Caco-2 (cell line): ENCODE measurements at regions of chr4 and their contacts with region 1.

Region 1: DNA sequence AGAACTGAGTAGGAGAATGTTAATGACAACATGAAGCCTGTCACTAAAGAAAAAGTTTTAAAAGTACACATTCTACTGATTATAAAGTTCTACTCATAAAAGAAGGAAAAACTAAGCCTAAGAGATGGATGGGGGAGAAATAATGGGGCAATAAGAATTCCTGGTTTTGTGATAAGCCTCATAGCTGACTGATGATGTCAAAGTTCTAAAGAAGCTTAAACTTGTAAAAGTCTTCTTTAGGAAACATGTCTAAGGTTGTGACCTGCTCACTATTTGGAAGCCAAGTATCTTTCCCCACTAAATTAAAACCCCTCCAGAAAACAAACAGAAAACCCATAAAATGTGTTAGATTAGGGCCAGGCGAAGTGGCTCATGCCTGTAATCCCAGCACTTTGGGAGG is 232.9 kb upstream of the GIMD1 start:
- DNase-seq: peak in 1 of 2 experiments; percentile 35
- H3K4me3 ChIP-seq: no peak overlapping the region
- H3K4me3 Mint-ChIP-seq: peak overlapping the region; percentile 9
- H3K27ac Mint-ChIP-seq: peak overlapping the region; percentile 67
- H3K4me1 ChIP-seq: peaks cover 35% of the 10 kb centered on the region
- H3K4me1 Mint-ChIP-seq: peaks cover 6% of the 10 kb centered on the region
- H3K27me3 ChIP-seq: no peaks in the 10 kb centered on the region
- H3K27me3 Mint-ChIP-seq: no peaks in the 10 kb centered on the region
- CTCF ChIP-seq: no peak

Region 2: DNA sequence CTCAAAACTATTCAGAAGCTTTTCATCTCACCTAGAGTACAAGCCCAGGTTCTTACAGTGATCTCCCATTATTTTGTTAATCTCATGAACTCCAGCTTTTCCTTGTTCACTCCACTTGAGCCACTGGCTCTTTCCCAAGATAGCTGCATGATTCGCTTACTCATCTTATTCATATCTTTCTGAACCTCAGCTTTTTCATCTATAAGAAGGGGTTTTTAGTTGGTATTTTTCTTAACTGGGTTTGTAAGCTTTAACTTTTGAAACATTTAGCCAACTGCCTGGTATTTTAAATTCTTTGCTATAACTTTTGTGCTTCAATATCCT is 256.9 kb before region 1 on chr4:
- CTCF ChIA-PET with region 1: no interaction called
- POLR2A ChIA-PET with region 1: no interaction called
- intact Hi-C with region 1: loop called (anchors 1 kb)
- DNase-seq: no peak
- H3K4me3 ChIP-seq: no peak overlapping the region
- H3K4me3 Mint-ChIP-seq: peak overlapping the region; percentile 27
- H3K27ac Mint-ChIP-seq: peak overlapping the region; percentile 71
- H3K4me1 ChIP-seq: peaks cover 55% of the 10 kb centered on the region
- H3K4me1 Mint-ChIP-seq: peaks cover 16% of the 10 kb centered on the region
- H3K27me3 ChIP-seq: no peaks in the 10 kb centered on the region
- H3K27me3 Mint-ChIP-seq: no peaks in the 10 kb centered on the region
- CTCF ChIP-seq: no peak

Region 3: DNA sequence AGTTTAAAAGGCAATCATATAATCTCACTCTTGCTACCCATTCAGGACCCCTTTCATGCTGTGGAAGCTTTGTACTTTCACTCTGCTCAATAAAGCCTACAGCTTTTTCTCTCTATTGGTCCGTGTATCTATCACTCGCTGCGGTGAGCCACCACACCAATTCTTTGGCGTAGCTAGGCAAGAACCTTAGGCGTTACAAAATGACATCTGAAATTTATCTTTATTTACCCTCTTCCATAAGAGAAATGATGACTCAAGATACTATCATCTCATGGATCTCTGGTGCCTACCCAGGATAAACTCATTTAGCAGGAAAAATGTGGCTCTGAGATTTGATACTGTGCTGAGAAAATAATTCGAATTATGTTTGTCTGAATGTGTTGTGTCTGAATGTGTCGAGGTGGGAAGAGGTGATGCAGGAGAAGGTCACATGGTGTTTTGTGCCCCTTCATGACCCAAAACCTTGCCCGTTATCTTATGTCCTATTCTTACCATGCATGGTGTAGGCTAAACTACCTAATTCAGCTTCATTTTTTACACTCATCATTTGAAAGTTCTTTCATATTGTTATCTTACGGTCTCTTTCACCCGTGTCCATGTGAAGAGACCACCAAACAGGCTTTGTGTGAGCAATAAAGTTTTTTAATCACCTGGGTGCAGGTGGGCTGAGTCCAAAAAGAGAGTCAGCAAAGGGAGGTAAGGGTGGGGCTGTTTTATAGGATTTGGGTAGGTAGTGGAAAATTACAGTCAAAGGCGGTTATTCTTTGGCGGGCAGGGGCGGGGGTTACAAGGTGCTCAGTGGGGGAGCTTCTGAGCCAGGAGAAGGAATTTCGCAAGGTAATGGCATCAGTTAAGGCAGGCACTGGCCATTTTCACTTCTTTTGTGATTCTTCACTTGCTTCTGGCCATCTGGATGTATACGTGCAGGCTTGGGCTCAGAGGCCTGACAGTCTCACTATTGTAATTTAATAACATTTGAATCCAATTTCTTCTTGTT is 191.3 kb before region 1 on chr4:
- CTCF ChIA-PET with region 1: no interaction called
- POLR2A ChIA-PET with region 1: interaction called, 5 read pairs
- intact Hi-C with region 1: loop called (anchors 2 kb)
- DNase-seq: no peak
- H3K4me3 ChIP-seq: no peak overlapping the region
- H3K4me3 Mint-ChIP-seq: no peak overlapping the region
- H3K27ac Mint-ChIP-seq: peak overlapping the region; percentile 54
- H3K4me1 ChIP-seq: peaks cover 57% of the 10 kb centered on the region
- H3K4me1 Mint-ChIP-seq: peaks cover 32% of the 10 kb centered on the region
- H3K27me3 ChIP-seq: no peaks in the 10 kb centered on the region
- H3K27me3 Mint-ChIP-seq: no peaks in the 10 kb centered on the region
- CTCF ChIP-seq: no peak

Region 4: GRCh38 chr4:106614441-106614840 is 12.9 kb after region 1 on chr4:
- CTCF ChIA-PET with region 1: no interaction called
- POLR2A ChIA-PET with region 1: no interaction called
- intact Hi-C with region 1: no loop called
- DNase-seq: no peak
- H3K4me3 ChIP-seq: no peak overlapping the region
- H3K4me3 Mint-ChIP-seq: no peak overlapping the region
- H3K27ac Mint-ChIP-seq: no peak overlapping the region
- H3K4me1 ChIP-seq: peaks cover 6% of the 10 kb centered on the region
- H3K4me1 Mint-ChIP-seq: peaks cover 19% of the 10 kb centered on the region
- H3K27me3 ChIP-seq: no peaks in the 10 kb centered on the region
- H3K27me3 Mint-ChIP-seq: no peaks in the 10 kb centered on the region
- CTCF ChIP-seq: no peak